SK-N-SH (cell line): ENCODE measurements at regions of chr16 and their contacts with region 1.

Region 1: DNA sequence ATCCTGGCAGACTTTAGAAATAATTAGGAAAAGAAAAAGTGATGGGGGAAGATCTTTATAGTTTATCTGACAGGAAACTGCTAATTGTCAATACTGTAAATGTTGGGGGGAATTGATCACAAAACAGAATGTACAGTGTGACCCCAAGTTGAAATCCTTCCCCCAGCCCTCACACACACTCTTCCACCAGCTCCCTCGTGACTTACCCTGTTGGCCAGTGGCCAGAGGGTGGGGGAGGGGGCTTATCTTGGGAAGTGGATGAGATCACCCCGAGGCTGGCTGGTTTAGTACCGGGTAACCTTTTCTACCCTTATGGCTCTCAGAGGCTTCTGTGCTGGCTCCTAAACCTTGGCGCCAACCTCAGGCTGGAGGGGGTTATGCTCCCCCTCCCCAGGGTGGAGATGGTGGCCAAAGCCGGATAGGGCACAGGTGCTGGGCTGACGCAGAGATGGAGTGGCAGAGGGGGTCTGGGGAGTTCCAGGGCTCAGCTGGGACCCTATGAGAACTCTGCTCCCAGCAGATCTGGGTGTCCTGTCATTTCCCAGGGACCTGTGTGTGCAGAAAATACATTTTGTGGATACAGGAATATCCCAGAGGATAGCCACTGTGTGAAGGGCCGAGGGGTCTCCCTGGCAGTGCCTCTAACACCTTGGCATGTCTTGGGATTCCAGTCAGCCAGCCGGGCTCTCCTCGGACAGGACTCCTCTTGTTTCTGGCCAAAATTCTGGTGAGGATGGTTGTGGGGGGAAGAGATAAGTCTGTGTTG is 18.6 kb downstream of the CDH16 start:
- DNase-seq: peak; percentile 81
- H3K4me3 ChIP-seq: no peak overlapping the region
- H3K27ac ChIP-seq: peak overlapping the region; percentile 43 to 53
- H3K4me1 ChIP-seq: peaks cover 19% of the 10 kb centered on the region in 2 experiments
- H3K27me3 ChIP-seq: no peaks in the 10 kb centered on the region
- CTCF ChIP-seq: no peak
- EP300 ChIP-seq: peak in 1 of 2 experiments; percentile 46; a peak in 2 of 4 replicates
- RAD21 ChIP-seq: no peak

Region 2: GRCh38 chr16:66850115-66850815 is 49.9 kb before region 1 on chr16:
- CTCF ChIA-PET with region 1: no interaction called
- POLR2A ChIA-PET with region 1: no interaction called
- DNase-seq: no peak
- H3K4me3 ChIP-seq: no peak overlapping the region
- H3K27ac ChIP-seq: no peak overlapping the region
- H3K4me1 ChIP-seq: no peaks in the 10 kb centered on the region
- H3K27me3 ChIP-seq: peaks cover 4% of the 10 kb centered on the region; the same call in 1 of the 2 replicates
- CTCF ChIP-seq: no peak
- EP300 ChIP-seq: no peak
- RAD21 ChIP-seq: no peak

Region 3: DNA sequence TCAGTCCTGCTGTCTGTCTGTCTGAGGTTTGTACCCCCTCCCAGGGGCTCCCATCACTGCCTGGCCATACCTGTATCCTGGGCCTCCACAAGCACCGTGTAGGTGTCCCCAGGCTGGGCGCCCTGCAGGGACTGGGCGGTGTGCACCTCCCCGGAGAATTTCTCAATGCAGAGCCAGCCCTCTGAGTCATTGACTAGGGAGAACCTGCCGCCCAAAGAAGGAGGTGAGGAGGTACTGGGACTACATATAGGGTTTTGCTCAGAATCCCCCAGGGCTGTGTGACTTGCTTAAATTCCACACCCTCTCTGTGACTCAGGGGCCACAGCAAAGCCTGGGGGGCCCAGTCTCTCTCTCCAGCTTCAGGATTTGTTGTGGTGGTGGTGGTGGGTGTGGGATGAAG is 11.0 kb after region 1 on chr16:
- CTCF ChIA-PET with region 1: interaction called, 174 read pairs
- POLR2A ChIA-PET with region 1: no interaction called
- DNase-seq: no peak
- H3K4me3 ChIP-seq: no peak overlapping the region
- H3K27ac ChIP-seq: no peak overlapping the region
- H3K4me1 ChIP-seq: no peaks in the 10 kb centered on the region
- H3K27me3 ChIP-seq: no peaks in the 10 kb centered on the region
- CTCF ChIP-seq: no peak
- EP300 ChIP-seq: no peak
- RAD21 ChIP-seq: no peak

Region 4: DNA sequence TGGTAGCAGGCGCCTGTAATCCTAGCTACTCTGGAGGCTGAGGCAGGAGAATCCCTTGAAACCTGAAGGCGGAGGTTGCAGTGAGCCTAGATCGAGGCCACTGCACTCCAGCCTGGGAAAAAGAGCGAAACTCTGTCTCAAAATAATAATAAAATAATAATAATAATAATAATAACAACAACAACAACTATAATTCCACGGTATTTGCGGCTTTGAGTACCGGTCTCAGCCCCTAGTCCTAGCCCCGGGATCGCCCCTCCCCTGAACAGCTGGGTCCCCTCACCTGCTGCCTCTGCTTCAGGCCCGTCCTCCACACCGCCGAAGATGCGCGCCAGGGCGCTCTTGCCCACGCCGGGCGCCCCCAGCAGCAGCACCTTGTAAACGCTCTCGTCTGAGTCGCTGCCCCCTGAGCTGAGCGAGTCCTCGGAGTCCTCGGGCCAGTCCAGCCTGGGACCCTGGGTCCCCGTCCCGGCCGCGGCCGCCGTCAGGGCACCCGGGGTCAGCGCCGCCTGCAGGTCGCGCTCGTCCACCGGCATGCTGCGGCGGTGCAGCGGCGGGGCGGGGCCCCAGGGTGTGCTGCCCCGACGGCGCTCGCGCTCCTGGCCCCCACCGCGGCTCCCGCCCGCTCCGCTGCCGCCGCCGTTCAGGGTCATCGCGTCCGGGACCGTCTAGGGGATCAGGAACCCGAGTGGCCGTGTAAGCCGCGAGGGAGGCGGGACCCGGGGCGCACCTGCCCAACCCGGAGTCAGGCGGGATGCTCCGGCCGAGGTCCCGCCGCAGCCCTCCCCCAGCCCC is 24.6 kb after region 1 on chr16:
- CTCF ChIA-PET with region 1: interaction called, 174 read pairs
- POLR2A ChIA-PET with region 1: interaction called, 6 read pairs
- DNase-seq: peak; percentile 94
- H3K4me3 ChIP-seq: peak overlapping the region in 1 of 2 experiments; percentile 37; a peak in 2 of 4 replicates
- H3K27ac ChIP-seq: no peak overlapping the region
- H3K4me1 ChIP-seq: peaks cover 4 to 13% of the 10 kb centered on the region in 2 experiments; a peak in 3 of 4 replicates
- H3K27me3 ChIP-seq: no peaks in the 10 kb centered on the region
- CTCF ChIP-seq: peak; percentile 50
- EP300 ChIP-seq: no peak
- RAD21 ChIP-seq: 0 out of 2 replicates have a peak, but pooled peaks have one; percentile 18